Aorta (tissue), 5 donors: ENCODE measurements at regions of chr7 and their contacts with region 1.

Region 1: GRCh38 chr7:149838224-149838947 is at the start of gene ZNF862:
- DNase-seq: peak; percentile 99
- ATAC-seq: peak; percentile 99
- H3K4me3 ChIP-seq: peak within 1 kb of the TSS; percentile 72 to 94
- H3K27ac ChIP-seq: peak within 1 kb of the TSS in 1 of 2 donors; percentile 46
- H3K4me1 ChIP-seq: no peaks in the 10 kb centered on the region
- H3K27me3 ChIP-seq: no peaks in the 10 kb centered on the region
- total RNA-seq, gene ZNF862: 15.8 to 30.1 TPM

Region 2: GRCh38 chr7:149624419-149625339 is 213.7 kb before region 1 on chr7:
- intact Hi-C with region 1: loop called in 1 of 2 experiments (anchors 10 kb)
- DNase-seq: peak; percentile 97 to 98
- ATAC-seq: peak; percentile 97
- H3K4me3 ChIP-seq: peak overlapping the region; percentile 72 to 94
- H3K27ac ChIP-seq: peak overlapping the region; percentile 28 to 49
- H3K4me1 ChIP-seq: no peaks in the 10 kb centered on the region
- H3K27me3 ChIP-seq: no peaks in the 10 kb centered on the region

Region 3: DNA sequence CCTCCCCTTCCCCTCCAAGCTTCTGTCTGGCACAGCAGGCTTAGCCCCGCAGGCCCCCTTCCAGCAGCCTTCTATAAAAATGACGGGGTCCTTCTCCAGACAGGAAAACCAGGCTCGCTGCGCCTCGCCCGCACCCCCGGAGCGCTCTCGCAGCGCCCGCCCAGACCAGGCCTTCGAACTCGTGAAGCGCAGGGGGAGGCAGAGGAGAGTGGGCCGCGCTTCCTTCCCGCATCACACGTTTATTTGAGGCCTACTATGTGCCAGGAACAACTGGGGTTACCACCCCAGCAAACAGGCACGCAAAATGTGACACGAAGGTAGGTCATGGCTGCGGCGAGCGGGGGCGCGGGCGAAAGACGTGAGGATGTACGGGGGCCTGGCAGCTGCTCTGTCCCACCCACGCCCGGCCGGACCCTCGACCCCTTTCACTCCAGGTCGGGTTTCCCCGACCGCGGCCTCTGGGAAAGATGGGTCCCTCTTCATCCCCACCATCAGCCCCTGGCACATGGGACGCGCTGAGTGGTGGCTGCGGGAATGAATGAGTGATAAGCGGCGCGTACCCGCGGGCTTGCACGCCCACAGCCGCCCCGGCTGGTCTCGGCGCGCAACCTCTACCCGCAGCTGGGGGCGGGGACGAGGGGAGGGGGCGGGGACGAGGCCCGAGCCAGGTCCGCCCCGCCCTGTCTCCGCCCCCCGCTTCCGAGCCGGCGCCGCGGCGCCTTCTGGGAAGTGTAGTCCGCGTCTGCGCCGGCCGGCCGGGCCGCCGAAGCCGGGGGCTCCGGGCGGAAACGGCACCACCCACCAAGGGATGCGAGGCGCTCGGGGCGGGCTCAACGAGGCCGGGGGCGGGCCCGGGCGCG is 124.1 kb before region 1 on chr7:
- intact Hi-C with region 1: loop called in 1 of 2 experiments (anchors 10 kb)
- DNase-seq: peak; percentile 94 to 97
- ATAC-seq: peak; percentile 96
- H3K4me3 ChIP-seq: peak overlapping the region; percentile 53 to 59
- H3K27ac ChIP-seq: no peak overlapping the region
- H3K4me1 ChIP-seq: no peaks in the 10 kb centered on the region
- H3K27me3 ChIP-seq: no peaks in the 10 kb centered on the region

Region 4: GRCh38 chr7:149753401-149754233 is 84.8 kb before region 1 on chr7:
- intact Hi-C with region 1: no loop called
- DNase-seq: no peak
- ATAC-seq: no peak
- H3K4me3 ChIP-seq: no peak overlapping the region
- H3K27ac ChIP-seq: no peak overlapping the region
- H3K4me1 ChIP-seq: no peaks in the 10 kb centered on the region
- H3K27me3 ChIP-seq: no peaks in the 10 kb centered on the region

Region 5: GRCh38 chr7:149771721-149772240 is 66.6 kb before region 1 on chr7:
- intact Hi-C with region 1: loop called (anchors 2 to 5 kb)
- DNase-seq: peak; percentile 95 to 96
- ATAC-seq: peak; percentile 95
- H3K4me3 ChIP-seq: peak overlapping the region; percentile 56 to 71
- H3K27ac ChIP-seq: no peak overlapping the region
- H3K4me1 ChIP-seq: no peaks in the 10 kb centered on the region
- H3K27me3 ChIP-seq: no peaks in the 10 kb centered on the region

Region 6: DNA sequence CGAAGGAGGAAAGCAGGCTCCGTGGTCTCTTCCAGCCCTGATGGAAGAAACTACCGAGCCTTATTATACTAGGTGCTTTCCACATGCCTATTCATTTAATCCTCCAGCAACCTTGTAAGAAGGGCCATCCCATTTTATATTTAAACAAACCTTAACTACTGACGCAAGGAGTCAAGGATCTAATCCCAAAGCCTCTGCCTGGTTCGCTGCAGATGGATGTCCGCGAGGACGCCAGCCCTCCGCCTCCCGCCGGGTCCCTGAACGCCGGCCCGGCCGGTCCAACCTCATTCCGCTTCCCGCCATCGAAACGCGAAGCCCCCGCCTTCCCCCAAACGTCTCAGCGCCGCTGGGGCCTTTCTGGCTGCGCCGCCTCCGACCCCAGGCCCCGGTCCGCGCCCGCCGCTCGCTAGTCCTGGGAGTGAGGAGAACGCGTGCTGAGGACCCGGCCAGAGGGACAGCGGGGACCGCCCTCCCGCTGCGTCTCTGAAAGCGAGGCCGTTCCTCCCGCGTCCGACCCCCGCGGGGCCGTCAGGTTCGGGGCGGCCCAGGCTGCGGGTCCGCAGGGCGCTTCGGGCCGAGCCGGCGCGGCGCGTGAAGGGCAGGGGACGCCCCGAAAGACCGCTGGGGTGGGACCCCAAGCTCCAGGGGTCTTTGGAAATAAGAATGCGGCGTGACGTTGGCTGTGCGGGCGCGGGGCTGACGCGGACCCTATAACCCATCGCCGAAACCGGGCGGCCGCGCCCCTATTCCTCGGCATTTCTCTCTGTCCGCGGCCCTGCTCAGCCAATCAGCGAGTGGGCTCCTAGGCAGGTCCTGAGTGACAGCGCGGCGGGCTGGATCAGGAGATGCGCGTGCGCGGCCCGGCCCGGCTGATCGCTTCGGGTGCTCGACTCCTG is 34.9 kb after region 1 on chr7 and contains the start of gene ATP6V0E2:
- intact Hi-C with region 1: loop called in 1 of 2 experiments (anchors 2 kb)
- DNase-seq: peak; percentile 97 to 98
- ATAC-seq: peak; percentile 95
- H3K4me3 ChIP-seq: peak within 1 kb of the TSS; percentile 55 to 67
- H3K27ac ChIP-seq: peak within 1 kb of the TSS in 1 of 2 donors; percentile 37
- H3K4me1 ChIP-seq: no peaks in the 10 kb centered on the region
- H3K27me3 ChIP-seq: no peaks in the 10 kb centered on the region
- total RNA-seq, gene ATP6V0E2: 12.2 to 19.9 TPM